PC-3 (cell line): ENCODE measurements at regions of chr9 and their contacts with region 1.

Region 1: GRCh38 chr9:1619915-1620710 is 395.0 kb upstream of the SMARCA2 start:
- DNase-seq: peak; percentile 48
- ATAC-seq: peak; percentile 33; the same call in 1 of the 2 replicates
- H3K4me3 ChIP-seq: no peak overlapping the region
- H3K27ac ChIP-seq: no peak overlapping the region
- H3K4me1 ChIP-seq: no peaks in the 10 kb centered on the region
- H3K27me3 ChIP-seq: no peaks in the 10 kb centered on the region
- CTCF ChIP-seq: peak; percentile 58

Region 2: GRCh38 chr9:1009101-1009707 is 610.9 kb before region 1 on chr9:
- CTCF ChIA-PET with region 1: no interaction called
- POLR2A ChIA-PET with region 1: no interaction called
- intact Hi-C with region 1: loop called (anchors 5 kb)
- DNase-seq: peak; percentile 90
- ATAC-seq: peak; percentile 97
- H3K4me3 ChIP-seq: no peak overlapping the region
- H3K27ac ChIP-seq: no peak overlapping the region
- H3K4me1 ChIP-seq: no peaks in the 10 kb centered on the region
- H3K27me3 ChIP-seq: no peaks in the 10 kb centered on the region
- CTCF ChIP-seq: peak; percentile 85

Region 3: GRCh38 chr9:1429297-1429696 is 190.8 kb before region 1 on chr9:
- CTCF ChIA-PET with region 1: no interaction called
- POLR2A ChIA-PET with region 1: no interaction called
- intact Hi-C with region 1: loop called (anchors 1 kb)
- DNase-seq: peak; percentile 45
- ATAC-seq: peak; percentile 74
- H3K4me3 ChIP-seq: no peak overlapping the region
- H3K27ac ChIP-seq: no peak overlapping the region
- H3K4me1 ChIP-seq: no peaks in the 10 kb centered on the region
- H3K27me3 ChIP-seq: peaks cover 17% of the 10 kb centered on the region
- CTCF ChIP-seq: peak; percentile 53

Region 4: GRCh38 chr9:1460143-1460769 is 159.9 kb before region 1 on chr9:
- CTCF ChIA-PET with region 1: no interaction called
- POLR2A ChIA-PET with region 1: no interaction called
- intact Hi-C with region 1: loop called (anchors 2 kb)
- DNase-seq: peak; percentile 47
- ATAC-seq: no peak
- H3K4me3 ChIP-seq: no peak overlapping the region
- H3K27ac ChIP-seq: no peak overlapping the region
- H3K4me1 ChIP-seq: peaks cover 19% of the 10 kb centered on the region
- H3K27me3 ChIP-seq: peaks cover 3% of the 10 kb centered on the region; the same call in 1 of the 2 replicates
- CTCF ChIP-seq: peak; percentile 69